AG04449 (cell line): ENCODE measurements at regions of chr15 and their contacts with region 1.

Region 1: GRCh38 chr15:75801859-75802593 is 41.2 kb upstream of the UBE2Q2 start:
- DNase-seq: no peak
- H3K4me3 ChIP-seq: peak overlapping the region; percentile 50
- CTCF ChIP-seq: peak; percentile 87

Region 2: DNA sequence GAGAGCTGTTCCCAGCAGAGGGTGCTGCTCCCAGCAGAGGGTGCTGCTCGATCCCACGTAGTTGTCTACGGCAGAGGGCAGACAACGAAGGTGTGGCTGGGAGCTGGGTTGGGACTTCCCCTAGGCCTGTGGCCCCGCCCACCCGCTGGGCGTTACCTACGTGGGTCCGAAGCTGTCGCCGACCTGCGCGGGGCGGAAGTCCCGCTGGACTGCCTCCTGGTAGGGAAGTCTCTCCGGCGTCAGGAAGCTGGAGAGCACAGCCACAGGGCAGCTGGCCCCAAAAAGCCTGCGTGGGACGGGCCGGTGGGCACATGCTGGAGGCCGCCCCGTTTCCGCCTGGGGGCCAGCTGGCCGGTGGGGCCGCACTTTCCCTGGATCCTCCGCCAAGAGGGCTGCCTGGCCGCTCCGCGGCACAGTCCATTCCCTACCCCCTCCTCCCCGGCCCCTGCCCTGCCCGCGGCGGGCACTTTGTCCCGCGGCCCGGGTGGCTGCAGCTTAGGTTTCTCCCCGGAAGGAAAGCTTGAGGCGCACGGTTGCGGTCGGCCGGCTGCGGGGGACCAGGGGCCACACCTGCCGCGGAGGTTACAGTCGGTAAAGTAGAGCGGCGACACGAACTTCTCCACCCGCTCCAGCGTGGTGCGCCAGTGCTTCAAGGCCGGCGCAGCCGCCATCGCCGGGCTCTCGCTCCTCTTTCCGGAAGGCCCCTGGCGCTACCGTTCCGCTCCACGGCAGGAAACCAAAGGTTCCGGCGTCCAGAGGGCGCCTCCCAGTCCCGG is 433.9 kb before region 1 on chr15 and contains the start of gene MAN2C1:
- CTCF ChIA-PET with region 1: interaction called, 17 read pairs
- POLR2A ChIA-PET with region 1: no interaction called
- DNase-seq: peak; percentile 81
- H3K4me3 ChIP-seq: peak within 1 kb of the TSS; percentile 86
- CTCF ChIP-seq: peak; percentile 90

Region 3: DNA sequence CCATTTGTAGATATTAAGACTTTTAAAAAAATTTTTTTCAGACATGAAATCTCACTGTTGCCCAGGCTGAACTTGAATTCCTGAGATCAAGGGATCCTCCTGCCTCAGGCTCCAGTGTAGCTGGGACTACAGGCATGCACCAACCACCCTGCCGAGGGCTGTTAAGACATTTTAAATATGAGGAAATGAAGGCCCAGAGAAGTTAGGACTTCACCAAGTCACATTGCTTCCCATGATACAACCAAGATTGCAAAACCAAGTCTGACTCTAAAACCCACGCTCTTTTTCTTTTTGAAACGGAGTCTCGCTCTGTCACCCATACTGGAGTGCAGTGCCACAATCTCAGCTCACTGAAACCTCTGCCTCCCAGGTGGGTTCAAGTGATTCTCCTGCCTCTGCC is 250.9 kb before region 1 on chr15:
- CTCF ChIA-PET with region 1: no interaction called
- POLR2A ChIA-PET with region 1: no interaction called
- DNase-seq: no peak
- H3K4me3 ChIP-seq: no peak overlapping the region
- CTCF ChIP-seq: no peak

Region 4: DNA sequence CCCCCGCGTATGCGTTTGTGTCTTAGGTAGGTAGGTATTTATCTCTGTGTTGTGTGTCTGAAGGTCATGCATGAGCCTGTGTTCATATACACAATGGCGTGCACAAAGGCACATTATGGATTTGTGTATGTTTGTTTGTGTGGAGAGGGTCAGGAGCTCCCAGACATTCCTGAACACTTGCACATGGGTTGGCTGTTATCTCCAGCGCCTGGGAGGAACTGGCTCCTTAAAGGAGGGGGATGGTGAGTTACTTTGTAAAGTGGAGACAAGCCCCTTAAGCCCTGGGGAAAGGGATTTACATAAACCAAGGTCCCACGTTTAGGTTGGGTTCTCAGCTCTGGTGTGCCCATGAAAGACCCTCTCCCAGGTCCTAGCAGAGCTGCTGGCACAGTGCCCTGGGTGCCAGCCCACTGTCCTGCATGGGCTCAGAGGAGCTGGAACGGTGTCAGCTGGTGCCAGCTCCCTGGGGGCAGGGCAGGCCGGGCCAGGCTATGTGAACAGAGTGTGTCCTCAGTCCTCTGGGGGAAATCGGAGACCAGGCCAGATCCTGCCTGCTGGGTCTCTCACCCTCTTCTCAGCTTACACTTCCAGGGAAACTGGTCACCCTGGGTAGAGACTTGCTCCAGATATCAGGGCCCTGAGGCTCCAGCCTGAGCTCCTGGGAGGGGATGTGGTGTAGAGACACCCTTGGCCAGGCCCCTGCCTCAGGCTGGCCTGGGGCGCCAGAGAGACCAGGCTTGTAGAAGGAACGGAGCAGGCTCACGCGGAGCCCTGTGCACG is 129.2 kb before region 1 on chr15:
- CTCF ChIA-PET with region 1: interaction called, 10 read pairs
- POLR2A ChIA-PET with region 1: no interaction called
- DNase-seq: peak; percentile 80
- H3K4me3 ChIP-seq: no peak overlapping the region; the same call in none of the 2 replicates
- CTCF ChIP-seq: no peak

Region 5: DNA sequence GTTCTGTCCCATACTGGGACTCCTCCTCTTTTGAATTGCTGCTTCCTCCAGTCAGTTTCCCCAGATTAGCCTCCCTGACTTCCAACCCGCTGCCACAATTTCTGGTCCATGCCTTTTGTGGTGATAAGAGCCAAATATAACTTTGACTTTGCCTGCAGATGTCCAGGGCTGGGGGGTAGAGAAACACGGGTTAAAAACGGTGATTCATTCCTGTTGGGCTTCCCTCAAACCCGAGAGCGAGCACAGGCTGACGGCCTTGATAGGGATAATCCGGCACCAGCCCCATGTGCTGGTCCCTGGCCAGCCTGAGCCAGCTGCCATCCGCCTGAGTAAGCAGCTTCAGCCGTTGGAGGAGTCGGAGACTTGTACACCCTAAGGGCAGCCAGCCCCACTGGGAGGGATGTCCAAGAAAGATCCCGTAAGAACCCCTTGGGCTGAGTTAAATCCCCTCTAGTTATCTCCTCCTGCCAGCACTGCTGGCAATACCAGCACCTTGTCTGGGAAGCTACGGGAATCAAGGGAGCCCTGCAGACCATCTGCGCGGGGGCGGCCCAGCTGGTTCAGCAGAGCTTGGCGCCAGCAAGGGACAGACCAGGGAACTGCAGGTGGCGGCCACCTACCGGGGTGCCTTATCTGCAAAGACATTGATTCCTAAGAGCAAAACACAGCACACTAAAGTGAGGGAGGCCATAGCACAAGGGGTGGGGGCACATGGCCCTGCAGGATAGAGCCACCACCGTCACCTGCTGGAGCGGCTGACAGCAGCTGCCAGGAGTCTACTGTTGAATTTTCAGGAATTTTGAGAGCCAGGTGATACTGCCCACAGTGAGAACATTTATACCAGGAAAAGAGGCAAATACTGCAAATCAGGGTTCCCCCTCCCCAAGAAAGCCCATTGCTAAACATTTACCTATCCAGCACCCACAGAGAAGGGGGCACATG is 107.5 kb before region 1 on chr15:
- CTCF ChIA-PET with region 1: interaction called, 19 read pairs
- POLR2A ChIA-PET with region 1: no interaction called
- DNase-seq: peak; percentile 91
- H3K4me3 ChIP-seq: no peak overlapping the region
- CTCF ChIP-seq: peak; percentile 48

Region 6: DNA sequence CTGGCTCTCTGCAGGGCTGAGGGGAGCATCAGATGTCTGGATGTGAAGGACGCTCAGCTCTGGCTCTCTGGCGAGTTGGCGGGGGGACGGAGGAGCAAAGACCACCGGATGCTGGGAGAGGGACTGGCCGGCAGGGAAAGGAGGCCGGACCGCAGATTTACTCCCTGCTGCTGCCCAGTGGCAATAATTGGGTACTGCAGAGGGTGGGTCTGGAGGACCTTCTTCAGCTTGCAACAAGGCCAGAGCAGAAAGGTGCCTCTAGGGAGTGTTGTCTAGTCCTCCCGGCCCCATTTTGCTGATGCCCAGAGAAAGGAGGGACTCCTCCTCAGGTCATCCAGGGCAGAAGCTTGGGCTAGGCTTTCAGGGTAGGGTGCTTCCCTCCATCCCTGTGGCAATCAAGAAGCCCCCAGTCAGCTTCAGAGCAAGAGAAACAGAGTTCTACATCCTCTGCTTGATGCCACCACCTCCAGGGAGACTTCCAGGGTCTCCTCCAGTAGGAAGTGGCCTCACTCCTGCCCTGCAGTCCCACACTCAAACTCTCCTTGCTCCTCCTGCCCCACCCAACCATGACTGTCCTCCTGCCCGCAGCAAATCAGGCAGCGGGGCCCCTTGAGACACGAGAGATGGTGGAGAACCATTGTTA is 69.1 kb before region 1 on chr15:
- CTCF ChIA-PET with region 1: interaction called, 59 read pairs
- POLR2A ChIA-PET with region 1: interaction called, 3 read pairs
- DNase-seq: no peak
- H3K4me3 ChIP-seq: no peak overlapping the region
- CTCF ChIP-seq: peak; percentile 86

Region 7: DNA sequence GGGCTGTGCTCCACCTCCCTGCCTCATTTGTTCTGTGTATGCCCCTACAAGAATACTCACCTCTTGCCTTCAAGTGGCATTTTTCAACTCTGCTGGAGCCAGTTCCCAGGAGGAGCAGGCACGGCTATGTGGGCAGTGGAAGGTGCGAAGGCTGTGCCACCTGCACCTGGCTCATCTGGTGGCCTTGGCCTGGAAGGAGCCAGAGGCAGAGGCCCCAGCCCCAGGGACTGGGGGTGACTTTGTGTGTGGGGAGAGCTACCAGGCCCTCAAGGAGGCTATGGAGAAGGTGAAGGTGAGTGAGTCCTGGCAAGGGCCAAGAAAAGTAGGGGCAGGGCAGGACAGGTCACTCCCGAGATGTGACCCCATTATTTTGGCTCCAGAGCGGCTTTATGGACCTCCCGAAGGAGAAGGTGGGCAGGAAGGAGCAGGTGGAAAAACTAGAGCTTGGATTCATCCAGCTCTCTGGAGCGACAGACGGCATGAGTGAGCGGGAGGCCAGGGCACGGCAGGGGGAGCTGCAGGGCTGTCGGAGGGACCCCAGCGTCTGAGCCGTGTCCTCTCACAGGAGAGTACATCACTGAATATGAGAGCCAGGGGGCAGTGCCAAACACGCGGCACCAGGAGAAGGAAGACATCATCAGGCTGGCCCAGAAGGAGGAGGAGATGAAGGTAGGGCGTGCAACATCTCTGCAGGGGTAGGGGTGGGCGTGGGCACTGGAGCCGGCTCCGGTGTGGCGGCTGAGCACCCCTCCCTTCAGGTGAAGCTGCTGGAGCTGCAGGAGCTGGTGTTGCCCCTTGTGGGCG is 16.1 kb before region 1 on chr15:
- CTCF ChIA-PET with region 1: interaction called, 15 read pairs
- POLR2A ChIA-PET with region 1: no interaction called
- DNase-seq: no peak
- H3K4me3 ChIP-seq: no peak overlapping the region
- CTCF ChIP-seq: no peak

Region 8: GRCh38 chr15:75827691-75828090 is 25.7 kb after region 1 on chr15:
- CTCF ChIA-PET with region 1: interaction called, 13 read pairs
- POLR2A ChIA-PET with region 1: no interaction called
- DNase-seq: no peak
- H3K4me3 ChIP-seq: no peak overlapping the region
- CTCF ChIP-seq: no peak